Kidney (tissue), 22 donors: ENCODE measurements at regions of chr5 and their contacts with region 1.

Region 1: DNA sequence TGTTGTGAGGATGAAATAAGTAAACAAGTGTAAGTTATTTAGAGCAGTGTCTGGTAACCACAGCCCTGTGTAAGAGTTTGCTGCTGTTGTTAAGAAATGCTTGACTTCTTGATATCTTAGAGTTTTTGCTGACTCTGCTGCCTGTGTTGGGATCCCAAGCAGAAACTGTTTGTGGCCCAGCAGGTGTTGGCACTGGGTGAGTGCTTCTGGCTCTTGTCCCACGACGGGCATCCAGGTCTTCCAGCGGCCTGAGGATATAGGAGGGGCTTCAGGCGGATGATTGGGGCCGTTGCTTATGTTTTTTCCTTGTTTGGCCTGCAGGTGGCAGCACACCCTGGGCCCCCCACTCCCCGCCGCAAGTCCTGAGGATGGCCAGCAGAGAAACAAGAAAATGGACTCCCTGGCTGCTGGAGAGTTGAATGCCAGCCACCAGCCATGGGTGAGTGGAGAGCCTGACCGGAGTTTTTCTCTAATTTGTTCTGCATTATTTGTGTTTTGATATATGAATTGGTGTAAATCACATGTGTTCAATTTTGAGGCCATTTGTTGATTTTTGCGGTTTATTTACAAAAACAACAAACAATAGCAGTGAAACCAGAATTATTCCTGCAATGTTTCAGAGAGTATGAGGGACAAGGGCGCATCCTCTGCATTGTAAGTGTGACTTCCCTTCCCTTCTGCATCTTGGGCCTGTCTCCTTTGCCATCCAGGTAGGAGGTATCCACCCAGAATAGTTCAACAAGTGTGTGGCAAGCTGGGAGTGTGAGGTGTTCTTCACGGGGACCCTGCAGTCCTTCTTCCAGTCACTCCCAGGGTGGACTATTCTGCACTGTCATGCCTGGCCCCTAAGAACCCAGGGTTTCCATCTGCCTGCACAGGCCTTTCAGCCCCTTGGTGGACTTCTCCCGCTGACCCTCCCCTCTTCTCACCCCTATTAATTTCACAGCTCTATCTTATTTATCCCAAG is 50.3 kb downstream of the SLC22A5 start:
- DNase-seq: peak; percentile 86 to 92 (median 90)
- H3K4me3 ChIP-seq: peak overlapping the region in 1 of 3 donors; percentile 9
- H3K27ac ChIP-seq: peak overlapping the region; percentile 51 to 58
- H3K4me1 ChIP-seq: peaks cover under 1 to 51% (median 40%) of the 10 kb centered on the region in 3 donors
- H3K27me3 ChIP-seq: no peaks in the 10 kb centered on the region
- CTCF ChIP-seq: peak; percentile 70

Region 2: DNA sequence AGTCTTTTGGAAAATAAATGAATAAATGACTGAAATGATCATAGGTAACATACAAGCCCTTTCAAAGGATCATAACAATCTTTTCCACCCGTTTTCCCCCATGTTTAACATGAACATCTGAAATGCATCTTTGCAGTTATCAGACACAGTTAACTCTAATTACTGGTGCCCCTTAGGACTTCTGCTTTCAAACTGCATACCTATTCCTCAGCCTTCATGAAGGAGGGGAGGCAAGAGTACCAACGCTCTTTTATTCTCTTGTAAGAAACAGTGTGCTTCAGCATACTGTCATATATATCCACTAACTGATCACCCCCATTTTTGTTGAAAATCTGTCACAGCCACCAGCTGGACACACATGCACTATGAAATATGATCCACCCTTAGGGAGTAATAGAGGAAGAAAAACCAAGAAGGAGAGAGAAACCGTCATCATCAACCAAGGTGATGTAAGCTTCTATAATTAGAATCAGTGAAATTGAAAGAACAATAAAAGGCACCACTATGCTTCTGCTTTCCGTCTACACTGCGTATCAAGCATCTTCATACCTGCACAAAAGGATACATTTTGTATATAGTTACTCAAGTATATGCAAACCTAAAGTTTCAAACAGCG is 883.5 kb before region 1 on chr5:
- intact Hi-C with region 1: no loop called
- DNase-seq: peak in 2 of 5 donors; percentile 14 to 44
- H3K4me3 ChIP-seq: no peak overlapping the region
- H3K27ac ChIP-seq: no peak overlapping the region
- H3K4me1 ChIP-seq: no peaks in the 10 kb centered on the region
- H3K27me3 ChIP-seq: no peaks in the 10 kb centered on the region
- CTCF ChIP-seq: no peak

Region 3: GRCh38 chr5:132489871-132490485 is 70.2 kb after region 1 on chr5:
- intact Hi-C with region 1: loop called (anchors 10 kb)
- DNase-seq: peak; percentile 37 to 91 (median 57)
- H3K4me3 ChIP-seq: peak overlapping the region; percentile 46 to 67 (median 66)
- H3K27ac ChIP-seq: peak overlapping the region; percentile 96 to 97
- H3K4me1 ChIP-seq: peaks cover 0 to 51% (median 10%) of the 10 kb centered on the region in 3 donors
- H3K27me3 ChIP-seq: no peaks in the 10 kb centered on the region
- CTCF ChIP-seq: peak; percentile 19